ENCODE measurements at regions of chr11 and their contacts with region 1.

Region 1: GRCh38 chr11:95150946-95151684 is 61.5 kb downstream of the ENDOD1 start:
- DNase-seq: peak; percentile 86 to 98 (median 94)

Region 2: DNA sequence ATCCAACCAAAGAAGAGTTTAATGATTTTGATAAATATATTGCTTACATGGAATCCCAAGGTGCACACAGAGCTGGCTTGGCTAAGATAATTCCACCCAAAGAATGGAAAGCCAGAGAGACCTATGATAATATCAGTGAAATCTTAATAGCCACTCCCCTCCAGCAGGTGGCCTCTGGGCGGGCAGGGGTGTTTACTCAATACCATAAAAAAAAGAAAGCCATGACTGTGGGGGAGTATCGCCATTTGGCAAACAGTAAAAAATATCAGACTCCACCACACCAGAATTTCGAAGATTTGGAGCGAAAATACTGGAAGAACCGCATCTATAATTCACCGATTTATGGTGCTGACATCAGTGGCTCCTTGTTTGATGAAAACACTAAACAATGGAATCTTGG is 153.7 kb before region 1 on chr11:
- intact Hi-C with region 1: no loop called
- DNase-seq: no peak

Region 3: GRCh38 chr11:95705485-95706124 is 554.5 kb after region 1 on chr11:
- intact Hi-C with region 1: loop called (anchors 2 kb)
- DNase-seq: peak; percentile 79 to 96 (median 90)

Measured in head of caudate nucleus (tissue), 42 donors.